ENCODE measurements at regions of chr2 and their contacts with region 1.

Region 1: GRCh38 chr2:10832203-10832936 is 19.8 kb upstream of the PDIA6 start:
- DNase-seq: peak; percentile 90
- ATAC-seq: peak; percentile 81

Region 2: DNA sequence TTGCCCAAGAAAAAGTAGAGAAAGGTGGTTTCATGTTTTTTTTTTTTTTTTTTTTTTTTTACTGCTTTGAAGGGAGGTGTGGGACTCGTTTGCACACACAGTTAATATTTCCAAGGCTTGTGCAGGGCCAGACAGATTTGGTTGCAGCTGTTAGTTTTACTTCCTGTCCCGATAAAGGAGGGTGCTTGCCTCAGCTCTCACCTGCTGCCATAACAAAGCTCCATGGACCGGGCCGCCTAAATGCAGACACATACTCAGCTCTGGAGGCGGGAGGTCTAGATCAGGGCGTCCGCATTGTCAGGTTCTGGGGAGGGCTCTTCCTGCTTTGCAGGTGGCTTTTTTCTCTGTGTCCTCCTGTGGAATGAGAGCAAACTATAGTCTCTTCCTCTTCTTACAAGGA is 454.2 kb before region 1 on chr2:
- intact Hi-C with region 1: no loop called
- DNase-seq: no peak
- ATAC-seq: no peak

Region 3: DNA sequence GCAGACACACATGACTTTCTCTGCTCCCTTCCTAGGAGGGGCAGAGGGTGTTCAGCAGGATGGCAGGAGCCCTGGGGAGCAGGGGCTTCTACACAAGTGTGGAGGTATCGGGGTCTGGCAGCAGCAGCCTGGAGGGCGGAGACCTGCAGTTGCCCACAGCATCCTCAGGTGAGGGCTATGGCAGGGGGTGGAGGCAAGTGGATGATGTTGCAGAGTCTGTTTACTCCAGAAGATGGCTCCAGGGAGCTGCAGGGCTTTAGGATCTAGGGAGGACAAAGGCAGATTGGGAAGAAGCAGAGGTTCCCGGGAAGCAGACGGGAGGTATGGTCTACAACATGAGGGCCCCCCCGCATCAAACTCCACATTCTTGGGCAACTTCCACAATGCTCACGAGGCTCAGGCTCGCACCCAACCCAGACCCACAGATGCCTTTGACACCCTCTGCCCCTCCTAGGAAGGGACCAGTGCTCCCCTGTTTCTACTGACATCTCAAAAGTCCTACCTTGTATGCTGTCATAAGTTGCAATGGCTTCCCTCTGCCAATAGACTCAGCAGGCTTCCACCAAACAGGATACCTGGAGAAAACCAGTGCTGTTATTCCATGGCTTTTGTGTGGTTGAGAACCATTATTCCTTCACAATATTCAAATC is 123.0 kb before region 1 on chr2:
- intact Hi-C with region 1: loop called (anchors 2 kb)
- DNase-seq: no peak
- ATAC-seq: no peak

Region 4: DNA sequence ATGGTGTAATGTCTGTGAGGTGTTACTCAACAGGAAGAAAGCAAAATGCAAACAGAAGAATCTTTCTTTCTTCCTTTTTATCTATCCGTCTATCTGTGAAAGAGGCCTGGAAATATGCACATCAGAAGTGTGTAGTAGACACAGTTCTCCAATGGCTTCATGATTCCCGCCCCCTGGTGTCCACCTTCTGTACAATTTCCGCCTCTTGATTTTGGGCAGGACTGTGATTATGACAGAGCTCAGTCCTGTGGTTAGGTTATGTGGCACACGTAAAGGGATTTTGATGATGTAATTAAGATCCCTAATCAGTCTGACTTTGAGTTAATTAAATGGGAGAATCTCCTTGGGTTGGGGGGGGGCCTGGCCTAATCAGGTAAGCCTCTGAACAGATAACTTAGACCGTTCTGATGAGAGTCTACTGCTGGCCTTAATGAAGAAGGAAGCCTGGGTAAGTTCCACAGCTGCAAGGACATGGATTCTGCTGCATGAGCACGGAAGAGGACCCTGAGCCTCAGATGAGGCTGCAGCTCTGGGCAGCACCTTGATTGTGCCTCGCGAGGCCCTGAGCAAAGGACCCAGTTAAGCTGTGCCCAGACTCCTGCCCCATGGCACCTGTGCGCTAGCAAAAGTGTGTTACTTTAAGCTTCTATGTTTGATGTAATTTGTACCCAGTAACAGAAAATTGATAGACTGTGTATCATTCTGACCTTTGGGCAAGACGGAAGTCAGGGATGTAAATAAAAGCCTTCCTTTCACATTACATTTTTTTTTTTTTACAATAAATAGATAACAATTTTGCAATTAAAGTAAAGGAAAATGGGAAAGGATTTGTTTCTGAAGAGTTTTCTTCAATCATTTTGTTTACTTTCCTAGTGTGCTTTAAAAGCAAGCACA is 68.1 kb after region 1 on chr2:
- intact Hi-C with region 1: no loop called
- DNase-seq: no peak
- ATAC-seq: no peak

Region 5: GRCh38 chr2:10911261-10912075 is 79.1 kb after region 1 on chr2 and contains the start of gene KCNF1:
- intact Hi-C with region 1: loop called (anchors 5 kb)
- DNase-seq: peak; percentile 11
- ATAC-seq: peak; percentile 21
- total RNA-seq, gene KCNF1: 0.24 TPM

Region 6: DNA sequence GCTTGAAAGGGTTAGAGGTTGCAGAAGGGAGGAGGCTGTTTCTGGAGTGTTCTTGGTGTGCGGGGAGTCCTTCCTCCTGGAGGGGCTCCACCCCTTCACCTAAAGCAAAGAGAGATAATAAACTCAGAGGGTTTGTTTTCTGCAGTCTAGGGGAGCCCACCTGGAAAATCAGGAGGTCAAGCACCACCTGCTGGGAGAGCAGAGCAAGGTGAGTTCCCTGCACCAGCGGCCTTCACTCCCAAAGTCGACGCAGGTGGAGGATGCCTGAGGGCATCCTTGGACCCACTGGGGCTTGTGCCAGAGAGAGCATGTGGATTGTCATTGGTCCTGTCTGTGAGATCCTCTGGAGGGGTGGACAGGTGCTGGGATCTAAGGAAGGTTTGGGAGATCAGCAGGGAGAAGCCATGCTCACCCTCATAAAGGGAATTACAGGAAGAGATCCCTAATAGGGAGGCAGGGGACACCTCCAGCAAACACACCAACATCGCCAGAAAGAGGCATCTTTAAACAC is 196.1 kb after region 1 on chr2:
- intact Hi-C with region 1: loop called (anchors 1 kb)
- DNase-seq: no peak
- ATAC-seq: no peak

Region 7: DNA sequence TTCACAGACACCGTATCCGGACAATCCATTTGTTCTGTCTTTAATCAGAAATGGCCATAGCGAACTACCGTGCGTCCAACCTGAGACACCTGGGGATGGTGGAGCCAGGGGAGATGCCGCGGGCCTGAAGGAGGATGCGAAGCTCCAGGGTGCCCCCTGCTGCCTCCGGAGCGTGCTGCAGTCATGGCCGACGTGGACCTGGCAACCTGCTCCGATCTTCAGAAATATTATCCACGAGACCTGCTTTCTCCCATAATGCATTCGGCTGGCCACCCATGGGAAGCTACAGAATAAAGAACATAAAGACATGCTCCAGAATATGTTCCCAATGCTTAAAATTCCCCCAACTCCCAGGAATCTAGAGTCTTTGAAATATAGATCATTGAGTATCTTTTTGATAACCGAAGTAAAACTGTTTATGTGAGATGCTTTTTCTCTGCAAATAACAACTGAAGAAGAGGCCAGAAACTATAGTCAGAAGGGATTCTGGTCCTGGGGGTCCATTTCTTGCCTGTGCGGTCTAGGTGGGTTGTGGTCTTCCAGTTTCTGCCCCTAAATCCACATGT is 292.2 kb after region 1 on chr2:
- intact Hi-C with region 1: loop called (anchors 1 kb)
- DNase-seq: no peak
- ATAC-seq: no peak

Measured in Right ventricle myocardium inferior (tissue), 1 donor.